H1 (cell line): ENCODE measurements at regions of chr1 and their contacts with region 1.

Region 1: GRCh38 chr1:24308365-24309015 is 10.7 kb upstream of the GRHL3 start:
- DNase-seq: peak in 1 of 2 experiments; percentile 63
- H3K4me3 ChIP-seq: no peak overlapping the region
- H3K27ac ChIP-seq: peak overlapping the region; percentile 57; the same call in 1 of the 2 replicates
- H3K4me1 ChIP-seq: peaks cover 5 to 36% (median 28%) of the 10 kb centered on the region in 4 experiments; a peak in 6 of 7 replicates
- H3K27me3 ChIP-seq: no peaks in the 10 kb centered on the region
- CTCF ChIP-seq: peak; percentile 26 to 70 (median 69)
- EP300 ChIP-seq: no peak
- POLR2A ChIP-seq: no peak
- RAD21 ChIP-seq: peak; percentile 51 to 68

Region 2: GRCh38 chr1:24289937-24290595 is 18.4 kb before region 1 on chr1:
- CTCF ChIA-PET with region 1: interaction called, 28 read pairs
- POLR2A ChIA-PET with region 1: interaction called, 3 read pairs
- DNase-seq: no peak
- H3K4me3 ChIP-seq: no peak overlapping the region
- H3K27ac ChIP-seq: no peak overlapping the region
- H3K4me1 ChIP-seq: peaks cover 6 to 23% (median 11%) of the 10 kb centered on the region in 4 experiments
- H3K27me3 ChIP-seq: 0 out of 7 replicates have a peak, but pooled peaks cover 0 to 1% (median 0%) of the 10 kb centered on the region in 4 experiments
- CTCF ChIP-seq: no peak
- EP300 ChIP-seq: no peak
- POLR2A ChIP-seq: no peak
- RAD21 ChIP-seq: no peak